Right ventricle myocardium inferior (tissue), 1 donor: ENCODE measurements at regions of chr1 and their contacts with region 1.

Region 1: DNA sequence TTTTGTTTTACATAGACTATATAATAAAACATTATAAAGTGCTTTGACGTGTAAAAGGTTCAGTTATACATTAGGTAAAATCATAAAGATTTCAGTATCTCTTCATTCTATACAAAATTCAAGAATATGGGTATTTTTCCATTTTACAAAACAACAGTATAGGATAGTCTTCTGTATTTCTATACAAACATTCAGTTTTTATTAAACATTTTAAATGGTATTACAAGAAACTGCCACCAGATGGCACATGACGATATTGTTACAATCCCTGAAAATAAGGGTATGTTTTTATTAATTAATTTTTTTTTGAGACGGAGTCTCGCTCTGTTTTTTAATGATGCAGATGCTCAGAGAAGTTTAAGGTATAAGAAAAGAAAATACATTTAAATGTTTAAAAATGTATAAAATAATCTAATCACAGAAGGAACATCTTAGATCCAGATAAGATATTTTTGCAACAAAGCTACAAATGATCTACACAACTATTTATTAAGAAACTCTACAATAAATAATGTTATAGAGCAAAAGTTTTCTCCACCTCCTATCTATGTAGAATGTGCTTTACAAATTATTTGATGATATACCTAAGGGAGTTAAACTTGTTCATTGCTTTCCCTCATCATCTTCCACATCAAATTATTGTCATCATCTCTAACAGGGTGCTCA is 23.5 kb upstream of the RSBN1 start:
- DNase-seq: no peak
- ATAC-seq: no peak

Region 2: DNA sequence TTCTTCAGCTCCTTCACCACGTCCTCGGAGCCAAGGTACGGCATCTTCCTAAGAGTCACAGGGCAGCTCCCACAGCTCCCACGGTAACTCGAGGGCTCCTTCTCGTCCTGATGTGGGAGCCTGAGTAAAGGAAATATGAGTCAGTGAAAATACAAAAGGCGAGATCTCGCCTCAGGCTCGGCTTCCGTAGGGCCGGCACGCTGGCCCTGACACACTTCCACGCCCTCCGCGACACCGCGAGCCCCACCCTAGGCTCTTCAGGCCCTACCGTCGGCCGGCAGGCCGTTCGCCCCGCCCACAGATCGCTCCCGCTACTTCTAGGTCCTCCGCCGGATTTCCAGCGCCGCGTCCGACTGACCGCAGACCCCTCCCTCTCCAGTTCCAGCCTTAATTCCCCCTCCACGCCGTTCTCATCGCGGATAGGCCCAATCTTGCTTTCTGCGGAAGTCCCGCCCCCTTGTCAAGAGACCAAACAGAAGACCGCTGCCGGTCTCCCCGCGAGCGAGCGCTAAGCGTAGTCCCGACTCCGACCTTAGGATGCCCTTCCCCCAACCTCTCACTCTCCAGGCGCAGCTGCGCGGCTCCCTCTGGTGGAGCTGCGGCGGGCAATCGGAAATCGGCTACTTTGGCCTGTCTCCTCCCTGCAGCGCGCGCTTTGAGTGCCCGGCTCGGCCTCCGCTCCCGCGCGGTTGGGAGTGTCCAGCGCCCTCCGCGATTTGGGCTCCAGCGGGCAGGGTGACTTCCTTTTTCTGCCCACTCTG is 69.1 kb after region 1 on chr1 and contains the starts of genes AP4B1 and DCLRE1B:
- intact Hi-C with region 1: loop called (anchors 5 kb)
- DNase-seq: peak; percentile 100
- ATAC-seq: peak; percentile 99
- total RNA-seq, gene AP4B1: 12.2 TPM
- total RNA-seq, gene DCLRE1B: 2.4 TPM

Region 3: GRCh38 chr1:114290341-114290740 is 454.6 kb after region 1 on chr1:
- intact Hi-C with region 1: no loop called
- DNase-seq: no peak
- ATAC-seq: no peak